Heart right ventricle (tissue), 16 donors: ENCODE measurements at regions of chr1 and their contacts with region 1.

Region 1: DNA sequence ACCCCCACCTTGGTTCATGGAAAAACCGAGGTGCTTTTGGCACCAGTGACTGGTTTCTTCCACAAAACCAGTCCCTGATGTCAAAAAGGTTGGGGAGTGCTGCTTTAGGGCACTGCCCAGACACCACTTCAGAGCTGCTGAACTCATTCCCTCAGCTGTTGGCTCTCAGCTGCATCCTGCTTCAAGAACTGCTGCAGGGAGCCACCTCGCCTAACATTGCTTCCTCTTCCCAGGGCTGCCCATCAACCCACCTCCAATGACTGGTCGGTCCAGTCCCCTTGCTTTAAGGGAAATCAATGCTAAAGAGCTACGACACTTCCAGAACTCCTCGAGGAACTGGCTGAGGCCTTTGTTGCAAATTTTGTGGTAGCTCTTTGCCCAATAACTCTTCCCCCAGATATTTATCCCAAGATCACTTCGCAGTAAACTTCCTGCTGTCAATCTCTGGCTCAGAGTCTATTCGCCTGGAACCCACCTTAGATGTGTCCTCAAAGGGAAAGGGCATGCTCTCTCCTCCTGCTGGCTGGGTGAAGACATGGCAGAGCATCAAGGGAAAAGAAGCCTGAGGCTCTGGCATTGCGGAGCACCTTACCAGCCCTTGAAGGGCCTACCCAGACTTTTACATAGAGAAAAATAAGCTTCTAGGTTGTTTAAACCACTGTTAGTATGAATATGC is 29.0 kb downstream of the C1orf52 start:
- DNase-seq: no peak
- ATAC-seq: peak in 2 of 8 donors; percentile 20 to 47
- H3K4me3 ChIP-seq: no peak overlapping the region
- H3K27ac ChIP-seq: peak overlapping the region in 3 of 10 donors; percentile 47 to 77 (median 61)
- H3K4me1 ChIP-seq: peaks cover 0 to 23% (median 5%) of the 10 kb centered on the region in 9 donors
- H3K27me3 ChIP-seq: no peaks in the 10 kb centered on the region
- CTCF ChIP-seq: peak in 4 of 9 donors; percentile 10 to 25 (median 15)

Region 2: GRCh38 chr1:85134576-85135395 is 95.7 kb before region 1 on chr1:
- intact Hi-C with region 1: loop called in 1 of 10 experiments (anchors 5 kb)
- DNase-seq: no peak
- ATAC-seq: no peak
- H3K4me3 ChIP-seq: no peak overlapping the region
- H3K27ac ChIP-seq: no peak overlapping the region
- H3K4me1 ChIP-seq: peaks cover 0 to 21% (median 5%) of the 10 kb centered on the region in 9 donors
- H3K27me3 ChIP-seq: no peaks in the 10 kb centered on the region
- CTCF ChIP-seq: no peak

Region 3: DNA sequence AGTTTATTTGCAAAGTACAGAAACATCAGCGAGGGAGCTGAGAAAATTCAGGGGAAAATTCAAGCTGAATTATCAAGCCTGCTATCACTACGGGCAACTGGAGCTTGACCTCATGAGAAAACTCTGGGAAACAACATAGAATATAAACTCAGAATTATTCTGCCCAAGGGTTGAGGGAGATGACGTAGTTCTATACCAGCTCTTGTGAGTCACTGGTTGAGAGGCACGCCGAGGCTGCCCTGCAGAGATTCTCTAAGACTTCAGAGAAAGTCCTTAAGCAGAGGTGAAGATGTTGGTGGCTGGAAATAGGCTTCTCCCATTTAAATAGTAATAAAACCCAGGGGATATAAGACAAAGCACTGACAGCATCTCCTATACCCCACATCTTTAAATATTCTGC is 41.9 kb before region 1 on chr1:
- intact Hi-C with region 1: no loop called
- DNase-seq: no peak
- ATAC-seq: no peak
- H3K4me3 ChIP-seq: no peak overlapping the region
- H3K27ac ChIP-seq: no peak overlapping the region
- H3K4me1 ChIP-seq: peaks cover 0 to 8% (median 0%) of the 10 kb centered on the region in 9 donors
- H3K27me3 ChIP-seq: no peaks in the 10 kb centered on the region
- CTCF ChIP-seq: no peak